Right ventricle myocardium inferior (tissue), 1 donor: ENCODE measurements at regions of chr19 and their contacts with region 1.

Region 1: DNA sequence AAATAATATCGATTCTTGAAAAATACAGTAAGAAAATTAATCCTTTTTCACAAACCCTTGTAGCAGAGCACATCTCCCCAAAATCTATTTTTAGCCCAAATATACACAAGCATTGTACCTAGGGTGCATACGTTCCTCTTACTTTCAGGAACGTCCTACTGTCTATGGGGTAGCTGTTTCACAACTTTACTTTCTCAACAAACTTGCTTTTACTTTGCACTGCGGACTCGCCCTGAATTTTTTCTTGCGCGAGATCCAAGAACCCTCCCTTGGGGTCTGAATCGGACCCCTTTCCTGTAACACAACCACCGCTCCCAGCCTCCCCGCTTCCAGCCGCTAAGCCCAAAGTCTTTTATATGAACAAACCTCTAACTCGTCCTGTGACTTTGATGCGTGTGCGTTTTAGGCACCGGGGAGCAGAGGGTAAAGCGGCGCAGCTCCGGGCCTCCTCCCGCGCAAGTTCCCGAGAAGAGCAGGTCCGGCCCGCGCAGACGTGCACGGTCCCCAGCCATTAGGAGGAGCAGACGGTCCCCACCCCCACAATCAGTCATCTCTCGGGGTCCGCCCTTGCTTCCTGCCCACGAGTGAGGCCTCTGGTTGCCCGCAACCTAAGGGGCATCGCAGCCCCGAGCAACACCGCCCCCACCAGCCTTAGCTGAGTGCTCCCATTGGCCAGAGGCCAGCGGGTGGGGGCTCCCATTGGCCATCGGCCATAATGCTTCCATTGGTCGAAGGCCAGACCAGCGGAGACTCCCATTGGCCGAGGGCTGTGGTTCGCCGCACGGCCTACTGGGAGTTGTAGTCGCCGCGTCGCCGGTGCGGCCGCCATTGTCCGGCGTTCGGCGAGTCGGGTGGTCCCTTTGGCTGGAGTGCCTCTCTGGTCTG is at the start of gene ZNF8:
- DNase-seq: peak; percentile 98
- ATAC-seq: peak; percentile 96
- total RNA-seq, gene ZNF8: 4.2 TPM

Region 2: DNA sequence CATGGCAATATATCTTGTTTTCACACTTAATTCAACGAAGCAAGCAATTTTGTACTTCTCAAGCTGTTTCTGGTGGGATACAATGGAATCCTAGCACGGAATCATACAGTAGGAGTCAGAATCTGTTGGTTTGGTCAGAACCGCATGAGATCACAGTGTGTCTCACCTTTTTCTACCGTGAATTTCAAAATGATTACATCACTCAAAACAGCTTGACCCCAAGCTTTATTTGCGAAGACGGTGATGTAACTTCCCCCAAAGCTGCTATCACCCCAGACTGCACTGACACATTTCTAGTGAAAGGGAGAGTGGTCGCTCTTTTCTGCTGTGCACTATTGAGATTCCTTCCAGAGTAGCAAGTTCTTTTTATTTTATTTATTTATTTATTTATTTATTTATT is 313.7 kb before region 1 on chr19:
- intact Hi-C with region 1: no loop called
- DNase-seq: no peak
- ATAC-seq: no peak

Region 3: DNA sequence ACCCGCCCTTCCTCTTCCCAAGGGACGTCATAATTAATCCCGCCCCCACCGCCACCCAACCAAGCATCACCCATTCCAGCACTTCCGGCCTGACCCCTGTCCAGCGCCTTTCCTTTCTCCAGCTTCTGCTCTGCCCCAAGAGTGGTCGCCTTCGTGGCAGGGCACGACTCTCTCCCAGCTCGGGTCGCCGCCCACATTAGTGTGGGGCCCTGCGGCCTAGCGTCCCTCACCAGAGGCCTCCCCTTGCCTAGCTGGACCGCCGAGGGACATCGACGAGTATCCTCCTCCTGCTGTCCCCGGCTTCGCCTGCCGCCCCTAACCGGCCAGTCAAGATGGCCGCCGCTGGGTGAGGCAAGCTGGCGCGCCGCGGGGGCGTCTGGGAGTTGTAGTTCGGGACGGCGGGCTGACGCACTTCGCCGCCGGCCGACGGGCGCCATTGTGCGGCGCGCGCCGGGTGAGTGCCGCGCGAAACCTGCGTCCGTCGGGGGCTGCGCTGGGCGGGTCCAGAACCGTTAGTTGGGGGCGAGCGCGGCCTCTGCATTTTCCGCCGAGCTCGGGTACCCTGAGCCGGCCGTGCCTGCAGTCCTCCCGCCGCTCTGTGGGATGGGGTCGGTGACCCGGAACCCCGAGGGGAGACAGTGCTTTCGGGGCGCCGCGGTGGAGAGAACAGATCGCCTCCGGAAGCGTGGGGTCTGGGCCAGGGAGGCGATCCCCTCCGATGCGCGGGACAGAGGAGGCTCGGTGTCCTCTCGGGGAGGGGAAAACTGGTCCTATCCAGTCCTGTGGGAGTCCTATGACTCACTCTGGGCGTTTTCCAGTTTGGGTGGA is 95.2 kb before region 1 on chr19 and contains the start of gene ZNF274:
- intact Hi-C with region 1: loop called (anchors 1 kb)
- DNase-seq: peak; percentile 98
- ATAC-seq: peak; percentile 97
- total RNA-seq, gene ZNF274: 17.8 TPM

Region 4: GRCh38 chr19:58243351-58243750 is 35.0 kb before region 1 on chr19:
- intact Hi-C with region 1: no loop called
- DNase-seq: no peak
- ATAC-seq: no peak

Region 5: DNA sequence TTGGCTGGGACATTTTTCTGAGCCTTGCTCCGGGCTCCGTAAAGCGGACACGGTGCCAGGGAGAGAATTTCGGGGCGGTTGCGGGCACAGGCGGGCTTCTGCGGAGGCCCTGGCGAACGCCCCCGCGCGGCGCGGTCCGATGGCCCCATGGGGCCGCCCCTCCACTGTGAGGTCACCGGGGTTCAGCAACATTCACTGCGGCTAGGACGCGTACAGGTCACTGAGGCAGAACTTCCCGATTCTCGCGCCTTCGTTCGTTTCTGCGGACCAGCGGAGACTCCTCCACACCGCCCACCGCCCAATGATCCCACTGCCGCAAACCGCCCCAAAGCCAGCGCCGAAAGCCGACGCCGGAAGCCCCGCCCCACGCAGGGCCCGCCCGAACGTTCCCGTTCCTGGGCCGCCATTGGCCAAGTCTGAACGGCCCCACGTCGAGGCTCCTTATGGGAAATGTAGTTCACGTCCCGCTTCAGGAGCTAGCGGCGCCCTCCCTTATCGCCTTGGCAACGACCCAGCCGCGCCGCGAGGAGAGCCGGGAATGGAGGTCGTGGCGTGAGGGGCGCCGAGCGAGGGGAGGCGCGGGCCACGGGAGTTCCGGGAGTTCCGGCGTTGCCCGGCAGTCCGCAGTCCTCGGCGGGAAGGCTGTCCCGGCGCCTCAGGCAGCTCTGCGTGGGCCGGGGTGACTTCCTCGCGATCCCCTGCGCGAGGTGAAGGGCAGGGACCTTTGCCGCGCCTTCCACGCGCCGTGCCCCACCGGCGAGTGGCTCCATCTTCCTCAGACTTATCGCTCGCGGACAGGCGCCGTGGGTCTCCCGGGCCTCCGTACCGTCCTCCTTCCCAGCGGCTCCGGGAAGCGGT is 130.0 kb after region 1 on chr19 and contains the start of gene ZNF584:
- intact Hi-C with region 1: no loop called
- DNase-seq: peak; percentile 98
- ATAC-seq: peak; percentile 99
- total RNA-seq, gene ZNF584: 15.8 TPM